HepG2 (cell line): ENCODE measurements at regions of chr1 and their contacts with region 1.

Region 1: GRCh38 chr1:20574686-20575540 is 14.0 kb upstream of the CDA start:
- DNase-seq: peak; percentile 75
- ATAC-seq: peak; percentile 97
- H3K4me3 ChIP-seq: no peak overlapping the region
- H3K27ac ChIP-seq: no peak overlapping the region
- H3K4me1 ChIP-seq: peaks cover 7% of the 10 kb centered on the region; the same call in 1 of the 2 replicates
- H3K27me3 ChIP-seq: no peaks in the 10 kb centered on the region; a peak in 1 of 5 replicates
- CTCF ChIP-seq: peak; percentile 90
- EP300 ChIP-seq: no peak
- POLR2A ChIP-seq: no peak
- RAD21 ChIP-seq: peak; percentile 76

Region 2: DNA sequence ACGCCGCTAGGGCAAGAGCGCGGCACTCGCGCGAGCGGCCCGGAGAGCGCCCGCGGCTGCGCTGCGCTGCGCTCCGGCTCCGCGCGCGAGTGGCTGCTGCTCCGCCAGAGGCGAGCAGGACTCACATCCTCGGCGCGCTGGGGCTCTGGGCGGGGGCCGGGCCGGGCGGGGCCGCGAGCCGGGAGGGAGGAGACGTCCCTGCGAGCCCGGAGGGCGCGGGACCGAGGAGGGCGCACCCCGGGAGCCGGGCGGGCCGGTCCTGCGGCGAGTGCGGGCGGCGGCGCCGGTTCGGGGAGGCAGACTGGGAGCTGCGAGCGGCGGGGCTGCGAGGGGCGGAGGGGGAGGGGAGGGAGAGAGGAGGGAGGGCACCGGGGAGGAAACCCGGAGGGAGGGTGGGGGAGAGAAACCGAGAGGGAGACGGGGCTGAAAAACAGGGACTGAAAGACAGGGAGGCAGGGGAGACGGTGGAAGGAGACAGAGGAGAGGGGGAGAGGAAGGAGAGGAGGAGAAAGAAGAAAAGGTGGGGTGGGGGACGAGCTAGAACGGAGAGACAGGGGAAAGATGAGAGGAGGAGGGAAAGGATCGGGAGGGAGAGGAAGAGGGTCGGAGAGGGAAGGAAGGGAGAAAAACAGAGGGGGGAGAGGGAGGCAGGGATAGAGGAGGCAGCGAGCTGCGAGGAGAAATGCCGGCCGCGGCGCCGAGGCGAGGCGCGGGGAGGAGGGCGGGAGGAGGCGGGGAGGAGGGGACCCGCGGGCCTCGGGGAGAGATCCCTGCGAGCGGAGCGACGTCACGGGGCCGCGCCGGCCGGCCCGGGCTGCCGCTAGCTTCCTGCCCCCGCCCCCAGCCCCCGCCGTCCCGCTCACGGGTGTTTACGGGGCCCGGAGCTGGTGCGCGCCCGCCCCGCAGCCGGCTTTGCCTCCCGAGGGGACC is 89.1 kb before region 1 on chr1 and contains the start of gene CAMK2N1:
- CTCF ChIA-PET with region 1: no interaction called
- POLR2A ChIA-PET with region 1: no interaction called
- in situ Hi-C with region 1: no loop called
- intact Hi-C with region 1: no loop called
- DNase-seq: peak; percentile 55
- ATAC-seq: peak; percentile 59
- H3K4me3 ChIP-seq: peak within 1 kb of the TSS; percentile 90 to 95 (median 92)
- H3K27ac ChIP-seq: peak within 1 kb of the TSS; percentile 98
- H3K4me1 ChIP-seq: peaks cover 51% of the 10 kb centered on the region
- H3K27me3 ChIP-seq: no peaks in the 10 kb centered on the region
- CTCF ChIP-seq: no peak
- EP300 ChIP-seq: no peak
- POLR2A ChIP-seq: no peak; a peak in 1 of 4 replicates
- RAD21 ChIP-seq: no peak
- total RNA-seq, gene CAMK2N1: 38.6 and 44.3 TPM in 2 replicates

Region 3: GRCh38 chr1:20521960-20522861 is 52.7 kb before region 1 on chr1:
- CTCF ChIA-PET with region 1: interaction called, 4 read pairs
- POLR2A ChIA-PET with region 1: no interaction called
- in situ Hi-C with region 1: no loop called
- intact Hi-C with region 1: loop called (anchors 5 kb)
- DNase-seq: peak; percentile 57
- ATAC-seq: peak; percentile 54
- H3K4me3 ChIP-seq: no peak overlapping the region
- H3K27ac ChIP-seq: no peak overlapping the region
- H3K4me1 ChIP-seq: peaks cover 5% of the 10 kb centered on the region
- H3K27me3 ChIP-seq: 0 out of 5 replicates have a peak, but pooled peaks cover 0 to 2% of the 10 kb centered on the region in 2 experiments
- CTCF ChIP-seq: peak; percentile 93
- EP300 ChIP-seq: no peak
- POLR2A ChIP-seq: no peak
- RAD21 ChIP-seq: peak; percentile 86

Region 4: GRCh38 chr1:20625176-20626097 is 50.5 kb after region 1 on chr1:
- CTCF ChIA-PET with region 1: no interaction called
- POLR2A ChIA-PET with region 1: no interaction called
- in situ Hi-C with region 1: no loop called
- intact Hi-C with region 1: no loop called
- DNase-seq: no peak
- ATAC-seq: no peak
- H3K4me3 ChIP-seq: no peak overlapping the region
- H3K27ac ChIP-seq: no peak overlapping the region
- H3K4me1 ChIP-seq: no peaks in the 10 kb centered on the region
- H3K27me3 ChIP-seq: no peaks in the 10 kb centered on the region
- CTCF ChIP-seq: no peak
- EP300 ChIP-seq: no peak
- POLR2A ChIP-seq: no peak
- RAD21 ChIP-seq: no peak